ENCODE measurements at regions of chr6 and their contacts with region 1.

Region 1: DNA sequence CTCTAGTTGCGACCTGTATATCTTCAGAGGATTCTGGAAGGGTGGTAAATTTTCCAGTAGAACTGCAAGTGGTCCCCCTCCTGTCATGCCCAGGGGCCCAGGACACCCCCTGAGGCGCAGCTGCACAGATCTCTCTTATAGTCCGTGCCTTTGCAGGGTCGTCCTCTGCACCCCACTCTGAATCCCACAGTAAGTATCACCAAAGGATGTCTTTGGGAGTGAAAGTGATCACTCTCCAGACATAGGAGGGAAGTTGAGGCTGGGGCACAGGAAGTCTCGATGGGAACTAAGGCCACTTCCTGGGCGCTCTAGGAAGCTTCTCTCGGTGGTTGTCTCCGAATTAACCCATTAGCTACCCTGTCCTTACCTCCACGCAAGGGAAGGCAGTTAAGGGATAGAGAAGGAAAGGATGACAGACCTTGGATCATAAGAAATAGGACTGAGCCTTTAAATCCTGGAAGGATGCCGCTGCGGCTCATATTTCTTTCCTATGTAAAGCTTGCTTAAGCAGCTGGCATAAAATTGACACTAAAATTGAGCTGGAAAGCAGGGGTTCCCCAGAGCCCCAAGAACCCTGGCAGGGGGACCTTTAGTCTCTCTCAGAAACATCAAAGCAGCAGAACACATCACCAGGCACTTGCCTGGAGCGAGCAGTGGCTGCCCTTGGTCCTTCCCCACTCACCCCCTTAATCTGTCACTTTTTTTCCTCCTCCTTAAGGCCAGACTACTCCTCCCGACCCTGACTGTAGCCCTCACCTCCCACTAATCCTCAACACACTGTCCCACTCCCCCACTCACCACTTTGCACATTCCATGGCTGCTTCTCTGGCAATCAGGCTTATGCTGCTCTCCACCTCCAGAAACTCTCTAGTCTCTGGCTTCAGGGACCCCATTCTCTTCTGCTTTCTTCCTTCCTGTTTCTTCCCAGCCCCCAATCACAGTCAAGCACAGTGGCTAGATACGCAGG is at the start of gene ZKSCAN4:
- DNase-seq: peak; percentile 35 to 87 (median 81)
- H3K4me3 ChIP-seq: peak within 1 kb of the TSS; percentile 57 to 100 (median 91)
- H3K27ac ChIP-seq: peak within 1 kb of the TSS in 54 of 59 donors; percentile 1 to 91 (median 66)
- H3K27me3 ChIP-seq: peaks cover 0 to 11% (median 0%) of the 10 kb centered on the region in 45 donors
- CTCF ChIP-seq: peak in 19 of 56 donors; percentile 6 to 41 (median 19)
- total RNA-seq, gene ZKSCAN4: 3.5 to 8.7 (median 6.2) TPM

Region 2: GRCh38 chr6:28124102-28124970 is 128.0 kb before region 1 on chr6 and contains the start of gene ZSCAN16:
- intact Hi-C with region 1: loop called in 1 of 2 experiments (anchors 10 kb)
- DNase-seq: peak; percentile 71 to 91 (median 87)
- H3K4me3 ChIP-seq: peak within 1 kb of the TSS; percentile 54 to 87 (median 76)
- H3K27ac ChIP-seq: peak within 1 kb of the TSS in 53 of 59 donors; percentile 3 to 92 (median 72)
- H3K27me3 ChIP-seq: no peaks in the 10 kb centered on the region
- CTCF ChIP-seq: peak in 28 of 56 donors; percentile 7 to 53 (median 26)
- total RNA-seq, gene ZSCAN16: 3.4 to 11.1 (median 6.4) TPM

Region 3: DNA sequence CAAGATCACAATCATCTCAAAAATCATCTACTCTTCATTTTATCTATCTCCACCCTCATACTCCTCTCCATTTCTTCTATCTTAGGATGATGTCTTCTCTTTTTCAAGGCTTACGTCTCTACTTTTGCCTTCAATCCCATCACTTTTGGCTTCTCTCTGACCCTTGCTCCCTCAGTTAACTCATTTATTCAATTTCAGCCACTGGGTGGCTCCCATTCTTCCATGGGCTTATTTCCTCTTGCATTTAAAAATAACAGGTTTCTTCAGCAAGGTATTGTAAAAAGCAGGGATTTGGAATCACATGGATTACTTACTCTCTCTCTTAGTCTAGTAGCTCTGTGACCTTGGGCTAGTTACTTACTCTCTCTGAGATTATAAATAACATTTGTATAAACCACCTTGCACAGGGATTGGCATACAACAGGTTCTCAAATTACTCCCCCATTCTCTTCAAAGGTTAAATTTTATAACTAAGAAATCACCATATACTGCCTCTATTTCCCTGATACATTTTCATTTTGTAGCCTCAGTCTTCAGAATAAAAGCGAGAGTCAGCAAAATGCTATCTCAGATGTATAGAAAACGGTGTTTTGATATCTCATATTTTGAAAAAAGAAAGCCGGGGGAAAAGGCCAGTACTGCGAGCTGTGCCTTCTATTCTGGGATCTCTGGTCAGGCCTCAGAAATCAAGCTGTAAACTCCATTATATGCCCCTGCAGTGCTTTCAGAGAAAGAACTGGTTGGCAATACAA is 141.8 kb after region 1 on chr6:
- intact Hi-C with region 1: loop called in 1 of 2 experiments (anchors 5 kb)
- DNase-seq: no peak
- H3K4me3 ChIP-seq: peak overlapping the region in 18 of 59 donors; percentile 2 to 35 (median 10)
- H3K27ac ChIP-seq: peak overlapping the region in 6 of 59 donors; percentile 4 to 59 (median 23)
- H3K27me3 ChIP-seq: no peaks in the 10 kb centered on the region
- CTCF ChIP-seq: peak in 34 of 56 donors; percentile 6 to 41 (median 24)

Measured in dorsolateral prefrontal cortex (tissue), 120 donors.